ENCODE measurements at regions of chr6 and their contacts with region 1.

Region 1: DNA sequence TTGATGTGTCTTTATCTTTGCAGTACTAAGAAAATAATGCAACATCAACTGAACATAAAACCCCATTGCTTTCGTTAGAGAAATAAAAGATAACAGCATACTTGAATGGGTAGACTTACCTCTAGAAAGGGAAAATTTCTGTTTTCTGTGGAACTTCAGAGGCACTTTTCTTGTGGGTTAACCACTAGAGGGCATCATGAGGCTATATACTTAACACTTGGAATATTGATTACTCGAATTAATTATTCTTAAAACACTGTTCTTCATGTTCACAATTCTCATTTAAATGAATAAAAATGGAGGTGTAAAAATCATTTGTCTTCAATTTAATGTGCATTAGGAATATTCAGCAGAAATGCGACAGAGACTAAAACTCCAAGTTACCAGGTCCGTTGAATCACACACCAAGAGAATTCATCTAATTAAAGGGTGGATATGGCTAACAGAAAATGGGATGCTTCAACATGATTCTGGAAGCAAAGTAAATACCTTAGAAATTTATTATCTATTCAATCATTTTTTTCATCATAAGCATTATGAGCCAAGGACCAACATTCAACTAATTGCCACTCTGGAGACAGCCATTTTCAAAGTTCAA is 330.8 kb upstream of the PREP start:
- DNase-seq: peak; percentile 18 to 48 (median 45)
- H3K4me3 ChIP-seq: no peak overlapping the region
- H3K4me3 Mint-ChIP-seq: no peak overlapping the region
- H3K27ac ChIP-seq: no peak overlapping the region
- H3K27ac Mint-ChIP-seq: no peak overlapping the region
- H3K4me1 ChIP-seq: no peaks in the 10 kb centered on the region
- H3K4me1 Mint-ChIP-seq: no peaks in the 10 kb centered on the region
- H3K27me3 ChIP-seq: no peaks in the 10 kb centered on the region
- H3K27me3 Mint-ChIP-seq: no peaks in the 10 kb centered on the region
- CTCF ChIP-seq: peak; percentile 86

Region 2: DNA sequence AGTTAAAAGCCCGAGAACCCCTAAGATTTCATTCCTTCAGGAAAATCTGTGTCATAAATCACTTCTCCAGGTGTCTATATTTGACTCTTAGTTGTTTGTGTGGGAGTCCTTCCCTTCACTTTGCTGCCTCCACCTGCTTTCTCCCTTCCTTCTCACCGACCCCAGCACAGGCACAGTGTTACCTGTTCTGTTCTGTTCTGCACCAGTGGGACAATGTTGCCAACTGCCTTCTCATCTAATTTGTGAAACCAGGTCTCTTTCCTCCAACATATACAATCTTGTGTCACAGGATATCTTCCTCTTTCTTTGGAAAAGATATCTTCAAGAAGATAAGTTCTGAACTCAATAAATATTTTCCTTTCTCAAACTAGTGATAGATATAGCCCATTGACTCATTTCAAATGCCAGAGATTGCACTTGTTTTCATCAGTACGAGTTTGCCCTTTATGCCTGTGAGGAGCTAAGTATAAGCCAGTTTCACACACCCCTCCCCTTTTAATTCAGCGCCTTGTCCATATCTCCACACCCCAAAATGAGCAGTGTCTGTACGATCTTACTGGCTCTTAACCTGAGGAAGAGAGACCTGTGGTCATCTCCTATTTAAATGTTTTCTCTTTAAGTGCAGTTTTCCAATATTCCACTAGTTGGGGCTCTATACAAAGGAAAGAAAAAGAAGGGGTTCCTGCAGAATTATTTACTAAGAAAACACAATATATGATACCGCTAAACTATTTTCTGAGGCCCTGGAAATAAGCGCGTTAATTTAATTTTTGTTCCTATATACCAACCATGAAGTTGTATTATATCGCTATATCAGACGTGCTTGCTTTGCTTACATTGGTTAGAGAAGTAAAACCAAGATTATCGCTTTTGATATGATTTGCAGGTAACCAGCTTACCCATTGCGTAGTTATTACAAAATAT is 249.2 kb before region 1 on chr6:
- intact Hi-C with region 1: loop called in 1 of 2 experiments (anchors 5 kb)
- DNase-seq: peak; percentile 13 to 34 (median 23)
- H3K4me3 ChIP-seq: no peak overlapping the region
- H3K4me3 Mint-ChIP-seq: no peak overlapping the region
- H3K27ac ChIP-seq: no peak overlapping the region
- H3K27ac Mint-ChIP-seq: peak overlapping the region in 2 of 7 donors; percentile 4 to 6
- H3K4me1 ChIP-seq: peaks cover 15 to 19% of the 10 kb centered on the region in 2 donors
- H3K4me1 Mint-ChIP-seq: peaks cover 36% of the 10 kb centered on the region
- H3K27me3 ChIP-seq: no peaks in the 10 kb centered on the region
- H3K27me3 Mint-ChIP-seq: peaks cover 0 to 3% (median 2%) of the 10 kb centered on the region in 3 donors
- CTCF ChIP-seq: peak; percentile 77

Region 3: DNA sequence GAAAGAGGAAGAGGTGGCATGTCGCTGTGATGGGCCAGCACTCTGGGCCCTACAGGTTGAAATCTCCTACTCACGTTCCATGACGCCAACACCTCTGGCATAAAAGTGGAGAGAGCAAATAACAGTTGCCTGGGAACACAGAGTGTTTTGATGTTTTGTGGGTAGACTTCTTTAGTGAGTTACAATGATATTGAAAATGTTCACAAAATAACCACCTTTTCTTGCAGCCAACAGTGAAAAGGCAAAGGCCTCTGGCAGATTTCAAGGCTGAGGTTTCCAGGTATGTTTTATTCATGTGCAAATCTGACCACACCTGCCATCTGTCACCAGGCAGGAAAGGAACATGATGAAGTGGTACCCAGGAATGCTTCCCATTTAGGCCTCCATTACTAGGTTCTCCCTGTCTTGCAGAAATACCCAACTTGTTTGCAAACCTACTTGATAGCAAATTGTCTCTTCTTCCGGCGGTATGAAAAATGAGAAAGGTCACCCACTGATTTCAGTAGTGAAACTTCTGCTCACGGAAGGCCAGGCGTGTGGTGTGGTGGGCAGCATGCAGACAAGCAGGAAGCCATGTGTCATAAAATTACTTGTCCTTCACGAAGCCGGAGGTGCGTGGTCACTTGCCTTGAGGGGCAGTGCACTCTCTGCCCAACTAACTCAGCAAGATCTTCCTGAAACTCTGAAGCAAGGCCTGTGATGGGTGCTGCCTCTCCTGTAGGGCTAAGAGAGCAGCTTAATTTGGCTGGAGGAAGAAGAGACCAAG is 53.4 kb after region 1 on chr6:
- intact Hi-C with region 1: no loop called
- DNase-seq: no peak
- H3K4me3 ChIP-seq: no peak overlapping the region
- H3K4me3 Mint-ChIP-seq: no peak overlapping the region
- H3K27ac ChIP-seq: no peak overlapping the region
- H3K27ac Mint-ChIP-seq: peak overlapping the region in 3 of 7 donors; percentile 59 to 79 (median 62)
- H3K4me1 ChIP-seq: peaks cover 54 to 59% of the 10 kb centered on the region in 2 donors
- H3K4me1 Mint-ChIP-seq: peaks cover 57% of the 10 kb centered on the region
- H3K27me3 ChIP-seq: no peaks in the 10 kb centered on the region
- H3K27me3 Mint-ChIP-seq: peaks cover 0 to 8% (median 2%) of the 10 kb centered on the region in 3 donors
- CTCF ChIP-seq: no peak

Region 4: GRCh38 chr6:105797983-105798453 is 64.4 kb after region 1 on chr6:
- intact Hi-C with region 1: no loop called
- DNase-seq: peak in 1 of 3 donors; percentile 26
- H3K4me3 ChIP-seq: no peak overlapping the region
- H3K4me3 Mint-ChIP-seq: no peak overlapping the region
- H3K27ac ChIP-seq: no peak overlapping the region
- H3K27ac Mint-ChIP-seq: peak overlapping the region in 2 of 7 donors; percentile 45 to 58
- H3K4me1 ChIP-seq: peaks cover 35 to 46% of the 10 kb centered on the region in 2 donors
- H3K4me1 Mint-ChIP-seq: peaks cover 48% of the 10 kb centered on the region
- H3K27me3 ChIP-seq: no peaks in the 10 kb centered on the region
- H3K27me3 Mint-ChIP-seq: no peaks in the 10 kb centered on the region
- CTCF ChIP-seq: no peak

Region 5: GRCh38 chr6:106223300-106223930 is 489.8 kb after region 1 on chr6:
- intact Hi-C with region 1: loop called (anchors 10 kb)
- DNase-seq: peak; percentile 58 to 85 (median 73)
- H3K4me3 ChIP-seq: no peak overlapping the region
- H3K4me3 Mint-ChIP-seq: no peak overlapping the region
- H3K27ac ChIP-seq: no peak overlapping the region
- H3K27ac Mint-ChIP-seq: no peak overlapping the region
- H3K4me1 ChIP-seq: peaks cover 5 to 6% of the 10 kb centered on the region in 2 donors
- H3K4me1 Mint-ChIP-seq: peaks cover 9% of the 10 kb centered on the region
- H3K27me3 ChIP-seq: no peaks in the 10 kb centered on the region
- H3K27me3 Mint-ChIP-seq: no peaks in the 10 kb centered on the region
- CTCF ChIP-seq: peak; percentile 84